ENCODE measurements at regions of chr10 and their contacts with region 1.

Region 1: GRCh38 chr10:76397181-76397881 is 965.9 kb downstream of the LRMDA start:
- DNase-seq: no peak
- H3K4me3 ChIP-seq: no peak overlapping the region
- H3K27ac ChIP-seq: peak overlapping the region; percentile 60
- H3K4me1 ChIP-seq: peaks cover 17% of the 10 kb centered on the region
- H3K27me3 ChIP-seq: no peaks in the 10 kb centered on the region
- CTCF ChIP-seq: no peak
- POLR2A ChIP-seq: no peak

Region 2: DNA sequence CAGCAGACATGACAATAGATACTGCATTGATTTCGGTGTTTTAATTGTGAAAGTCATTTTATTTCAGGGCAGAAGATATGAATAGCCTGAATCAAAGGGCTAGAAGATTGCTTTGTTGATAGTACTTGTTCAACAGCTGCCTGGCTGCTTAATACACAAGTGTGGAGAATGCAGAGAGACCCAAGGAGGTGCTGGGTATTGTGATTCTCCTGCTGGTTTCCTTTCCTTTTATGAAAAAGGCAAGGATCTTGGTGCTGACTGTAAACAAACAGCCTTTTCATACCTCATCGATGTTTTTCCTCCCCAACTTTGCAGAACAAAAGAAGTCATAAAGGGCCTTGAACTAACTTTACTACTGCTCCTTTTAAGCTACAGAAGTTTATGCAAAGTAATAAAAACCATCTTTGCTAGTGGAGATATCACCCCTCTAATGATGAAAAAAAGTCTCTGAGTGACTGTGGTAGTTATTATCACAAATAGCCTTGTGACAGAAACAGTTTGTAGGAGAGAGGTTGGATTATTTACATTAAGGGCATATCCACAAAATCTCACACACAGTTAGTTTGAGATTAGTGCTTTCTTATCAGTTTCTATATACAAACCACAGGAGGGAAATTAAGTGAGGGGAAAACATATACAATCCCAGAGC is 165.9 kb before region 1 on chr10:
- intact Hi-C with region 1: no loop called
- DNase-seq: no peak
- H3K4me3 ChIP-seq: no peak overlapping the region
- H3K27ac ChIP-seq: no peak overlapping the region
- H3K4me1 ChIP-seq: no peaks in the 10 kb centered on the region
- H3K27me3 ChIP-seq: no peaks in the 10 kb centered on the region
- CTCF ChIP-seq: no peak
- POLR2A ChIP-seq: no peak

Region 3: DNA sequence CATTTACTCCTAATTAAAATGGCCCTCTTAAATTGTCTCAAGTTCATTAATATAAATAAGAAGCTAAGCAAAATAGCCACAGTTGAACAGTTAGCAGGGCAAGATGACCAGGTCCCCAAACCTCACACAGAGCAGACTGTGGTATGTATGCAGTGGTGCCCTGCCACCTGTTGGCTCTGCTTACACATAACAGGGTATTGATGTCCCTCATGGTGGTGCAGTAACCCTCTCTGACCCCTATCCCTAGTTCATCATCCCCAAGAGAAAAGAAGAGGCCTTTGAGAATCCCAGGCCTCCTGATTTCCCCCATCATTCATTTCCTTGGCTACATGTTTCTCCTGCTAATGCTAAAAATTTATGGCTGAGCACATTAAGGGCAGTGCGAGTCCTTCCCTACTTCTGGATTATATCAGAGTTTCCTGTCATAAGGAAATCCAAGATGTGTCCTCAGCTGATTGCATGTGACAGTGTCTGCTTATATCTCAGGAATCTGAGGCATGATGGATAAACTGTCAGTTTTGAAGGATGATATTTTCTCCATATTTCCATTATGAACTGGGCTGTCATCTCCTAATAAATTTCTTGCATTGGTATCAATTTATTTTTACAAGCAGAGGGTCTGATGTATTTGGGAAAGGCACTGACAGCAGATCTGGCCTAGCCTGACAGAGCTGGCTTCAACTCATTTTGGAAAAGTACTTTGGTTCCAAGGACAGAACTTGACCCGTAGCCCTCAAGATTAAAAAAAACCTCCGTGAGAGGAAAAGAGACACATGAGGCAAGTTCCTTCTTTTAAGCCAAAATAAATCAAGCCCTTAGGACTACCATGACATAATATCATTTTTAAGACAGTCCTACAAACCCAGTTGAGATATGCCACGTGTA is 85.3 kb before region 1 on chr10:
- intact Hi-C with region 1: loop called (anchors 2 kb)
- DNase-seq: no peak
- H3K4me3 ChIP-seq: no peak overlapping the region
- H3K27ac ChIP-seq: peak overlapping the region; percentile 26
- H3K4me1 ChIP-seq: peaks cover 7% of the 10 kb centered on the region
- H3K27me3 ChIP-seq: no peaks in the 10 kb centered on the region
- CTCF ChIP-seq: no peak
- POLR2A ChIP-seq: no peak

Measured in vagina (tissue), 2 donors.